Activated CD4-positive, alpha-beta memory T cell treated with anti-CD3 and anti-CD28 coated beads for 36 hours (primary cell): ENCODE measurements at regions of chr1 and their contacts with region 1.

Region 1: GRCh38 chr1:160575112-160575664 is 4.1 kb downstream of the CD84 start:
- DNase-seq: no peak
- H3K4me3 Mint-ChIP-seq: peak overlapping the region; percentile 63
- H3K27ac Mint-ChIP-seq: peak overlapping the region; percentile 96
- H3K4me1 Mint-ChIP-seq: peaks cover 82% of the 10 kb centered on the region
- H3K27me3 Mint-ChIP-seq: no peaks in the 10 kb centered on the region

Region 2: DNA sequence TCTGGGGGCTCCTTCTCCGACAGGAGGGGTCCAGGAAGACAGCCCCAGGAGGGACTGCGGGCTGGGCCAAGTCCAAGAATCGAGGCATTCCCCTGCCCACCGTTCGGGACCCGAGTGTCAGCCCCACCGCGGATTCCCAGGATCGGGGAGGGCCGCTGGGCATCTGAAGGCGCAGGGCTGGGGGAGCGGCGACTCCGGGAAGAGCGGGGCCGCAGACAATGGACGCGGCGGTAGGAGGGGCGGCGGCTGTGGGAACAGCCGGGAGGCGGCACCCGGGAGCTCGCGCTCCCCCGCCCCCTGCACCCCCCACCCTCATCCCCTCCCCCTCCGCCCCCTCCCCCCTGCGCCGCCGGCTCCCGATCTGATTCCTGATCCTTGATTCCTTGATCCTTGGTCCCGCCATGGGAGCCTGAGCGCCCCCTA is 175.0 kb before region 1 on chr1 and contains the start of gene VANGL2:
- CTCF ChIA-PET with region 1: no interaction called
- POLR2A ChIA-PET with region 1: no interaction called
- intact Hi-C with region 1: no loop called
- DNase-seq: peak; percentile 46
- H3K4me3 Mint-ChIP-seq: no peak within 1 kb of the TSS
- H3K27ac Mint-ChIP-seq: no peak within 1 kb of the TSS
- H3K4me1 Mint-ChIP-seq: no peaks in the 10 kb centered on the region
- H3K27me3 Mint-ChIP-seq: peaks cover 17% of the 10 kb centered on the region
- total RNA-seq, gene VANGL2: not detected

Region 3: DNA sequence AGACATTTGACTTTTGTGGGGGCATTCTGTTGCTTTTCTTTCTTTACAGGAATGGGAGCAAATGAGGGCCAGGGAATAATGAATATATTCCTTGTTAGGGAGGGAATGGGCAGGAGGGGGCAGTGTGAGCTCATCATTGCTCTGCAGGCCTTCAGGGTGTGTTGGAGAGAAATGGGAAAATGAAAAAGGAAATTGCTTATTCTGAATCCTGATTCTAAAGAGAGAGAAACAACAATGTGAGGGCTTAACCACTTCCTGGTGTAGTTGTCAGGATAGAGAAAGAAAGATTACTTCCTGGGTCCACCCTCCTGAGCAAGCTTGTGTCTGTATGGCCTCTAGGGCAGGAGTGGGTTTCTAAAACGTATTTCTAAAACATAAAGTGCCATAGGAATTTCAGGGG is 146.5 kb before region 1 on chr1:
- CTCF ChIA-PET with region 1: interaction called, 4 read pairs
- POLR2A ChIA-PET with region 1: interaction called, 3 read pairs
- intact Hi-C with region 1: loop called (anchors 1 kb)
- DNase-seq: peak; percentile 57
- H3K4me3 Mint-ChIP-seq: no peak overlapping the region
- H3K27ac Mint-ChIP-seq: peak overlapping the region; percentile 77
- H3K4me1 Mint-ChIP-seq: peaks cover 60% of the 10 kb centered on the region
- H3K27me3 Mint-ChIP-seq: no peaks in the 10 kb centered on the region

Region 4: GRCh38 chr1:160459056-160459455 is 116.1 kb before region 1 on chr1:
- CTCF ChIA-PET with region 1: no interaction called
- POLR2A ChIA-PET with region 1: interaction called, 4 read pairs
- intact Hi-C with region 1: loop called (anchors 1 kb)
- DNase-seq: no peak
- H3K4me3 Mint-ChIP-seq: no peak overlapping the region
- H3K27ac Mint-ChIP-seq: peak overlapping the region; percentile 99
- H3K4me1 Mint-ChIP-seq: peaks cover 86% of the 10 kb centered on the region
- H3K27me3 Mint-ChIP-seq: no peaks in the 10 kb centered on the region

Region 5: GRCh38 chr1:160558660-160559380 is 16.4 kb before region 1 on chr1:
- CTCF ChIA-PET with region 1: interaction called, 4 read pairs
- POLR2A ChIA-PET with region 1: interaction called, 31 read pairs
- intact Hi-C with region 1: loop called (anchors 2 kb)
- DNase-seq: no peak
- H3K4me3 Mint-ChIP-seq: peak overlapping the region; percentile 71
- H3K27ac Mint-ChIP-seq: peak overlapping the region; percentile 91
- H3K4me1 Mint-ChIP-seq: peaks cover 71% of the 10 kb centered on the region
- H3K27me3 Mint-ChIP-seq: no peaks in the 10 kb centered on the region

Region 6: GRCh38 chr1:160711602-160712311 is 136.6 kb after region 1 on chr1 and contains the start of gene CD48:
- CTCF ChIA-PET with region 1: no interaction called
- POLR2A ChIA-PET with region 1: no interaction called
- intact Hi-C with region 1: loop called (anchors 5 kb)
- DNase-seq: peak; percentile 65
- H3K4me3 Mint-ChIP-seq: no peak within 1 kb of the TSS
- H3K27ac Mint-ChIP-seq: no peak within 1 kb of the TSS
- H3K4me1 Mint-ChIP-seq: peaks cover 17% of the 10 kb centered on the region
- H3K27me3 Mint-ChIP-seq: no peaks in the 10 kb centered on the region
- total RNA-seq, gene CD48: 190 to 194 TPM

Region 7: DNA sequence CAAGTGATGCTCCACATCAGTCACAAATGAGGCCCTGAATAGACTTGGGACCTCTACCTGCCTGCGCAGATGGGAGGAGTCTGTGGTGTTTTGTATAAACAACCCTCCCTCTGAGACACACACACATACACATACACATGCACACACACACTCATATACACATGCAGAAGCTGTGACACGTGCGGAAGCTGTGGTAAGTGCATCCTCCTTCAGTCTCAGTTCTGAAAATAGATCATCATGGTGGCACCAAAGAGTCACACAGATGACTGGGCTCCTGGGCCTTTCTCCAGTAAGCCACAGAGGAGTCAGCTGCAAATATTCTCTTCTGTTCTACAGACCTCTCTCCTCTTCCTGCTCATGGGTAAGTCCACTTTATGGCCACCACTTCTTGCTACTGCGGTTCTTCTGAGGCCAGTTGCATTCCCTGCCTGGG is 220.8 kb after region 1 on chr1 and contains the start of gene LY9:
- CTCF ChIA-PET with region 1: no interaction called
- POLR2A ChIA-PET with region 1: no interaction called
- intact Hi-C with region 1: no loop called
- DNase-seq: peak; percentile 90
- H3K4me3 Mint-ChIP-seq: peak within 1 kb of the TSS; percentile 77
- H3K27ac Mint-ChIP-seq: peak within 1 kb of the TSS; percentile 88
- H3K4me1 Mint-ChIP-seq: peaks cover 61% of the 10 kb centered on the region
- H3K27me3 Mint-ChIP-seq: no peaks in the 10 kb centered on the region
- total RNA-seq, gene LY9: 4.8 to 4.9 TPM